K562 (cell line): ENCODE measurements at regions of chr1 and their contacts with region 1.

Region 1: GRCh38 chr1:143720087-143721023 is 251.4 kb downstream of the FAM72C start:
- DNase-seq: peak; percentile 48 to 80 (median 52)
- ATAC-seq: peak; percentile 87
- H3K4me3 ChIP-seq: peak overlapping the region; percentile 12; the same call in 1 of the 2 replicates
- H3K27ac ChIP-seq: peak overlapping the region; percentile 85
- H3K4me1 ChIP-seq: peaks cover 19 to 20% of the 10 kb centered on the region in 2 experiments
- H3K27me3 ChIP-seq: no peaks in the 10 kb centered on the region
- CTCF ChIP-seq: no peak
- EP300 ChIP-seq: peak; percentile 15; the same call in 1 of the 2 replicates
- POLR2A ChIP-seq: peak; percentile 98
- RAD21 ChIP-seq: no peak

Region 2: GRCh38 chr1:143619851-143620250 is 100.5 kb before region 1 on chr1:
- CTCF ChIA-PET with region 1: no interaction called
- POLR2A ChIA-PET with region 1: no interaction called
- in situ Hi-C with region 1: no loop called
- intact Hi-C with region 1: no loop called
- DNase-seq: no peak
- ATAC-seq: no peak
- H3K4me3 ChIP-seq: no peak overlapping the region
- H3K27ac ChIP-seq: no peak overlapping the region
- H3K4me1 ChIP-seq: no peaks in the 10 kb centered on the region
- H3K27me3 ChIP-seq: peaks cover 0 to 5% of the 10 kb centered on the region in 2 experiments; a peak in 1 of 5 replicates
- CTCF ChIP-seq: no peak
- EP300 ChIP-seq: no peak
- POLR2A ChIP-seq: no peak
- RAD21 ChIP-seq: no peak

Region 3: GRCh38 chr1:143643148-143643885 is 77.0 kb before region 1 on chr1:
- CTCF ChIA-PET with region 1: no interaction called
- POLR2A ChIA-PET with region 1: no interaction called
- in situ Hi-C with region 1: no loop called
- intact Hi-C with region 1: no loop called
- DNase-seq: no peak
- ATAC-seq: no peak
- H3K4me3 ChIP-seq: no peak overlapping the region
- H3K27ac ChIP-seq: no peak overlapping the region
- H3K4me1 ChIP-seq: peaks cover 0 to 8% of the 10 kb centered on the region in 2 experiments; a peak in 1 of 5 replicates
- H3K27me3 ChIP-seq: peaks cover 2 to 12% of the 10 kb centered on the region in 2 experiments; a peak in 2 of 5 replicates
- CTCF ChIP-seq: no peak
- EP300 ChIP-seq: no peak
- POLR2A ChIP-seq: no peak
- RAD21 ChIP-seq: no peak

Region 4: DNA sequence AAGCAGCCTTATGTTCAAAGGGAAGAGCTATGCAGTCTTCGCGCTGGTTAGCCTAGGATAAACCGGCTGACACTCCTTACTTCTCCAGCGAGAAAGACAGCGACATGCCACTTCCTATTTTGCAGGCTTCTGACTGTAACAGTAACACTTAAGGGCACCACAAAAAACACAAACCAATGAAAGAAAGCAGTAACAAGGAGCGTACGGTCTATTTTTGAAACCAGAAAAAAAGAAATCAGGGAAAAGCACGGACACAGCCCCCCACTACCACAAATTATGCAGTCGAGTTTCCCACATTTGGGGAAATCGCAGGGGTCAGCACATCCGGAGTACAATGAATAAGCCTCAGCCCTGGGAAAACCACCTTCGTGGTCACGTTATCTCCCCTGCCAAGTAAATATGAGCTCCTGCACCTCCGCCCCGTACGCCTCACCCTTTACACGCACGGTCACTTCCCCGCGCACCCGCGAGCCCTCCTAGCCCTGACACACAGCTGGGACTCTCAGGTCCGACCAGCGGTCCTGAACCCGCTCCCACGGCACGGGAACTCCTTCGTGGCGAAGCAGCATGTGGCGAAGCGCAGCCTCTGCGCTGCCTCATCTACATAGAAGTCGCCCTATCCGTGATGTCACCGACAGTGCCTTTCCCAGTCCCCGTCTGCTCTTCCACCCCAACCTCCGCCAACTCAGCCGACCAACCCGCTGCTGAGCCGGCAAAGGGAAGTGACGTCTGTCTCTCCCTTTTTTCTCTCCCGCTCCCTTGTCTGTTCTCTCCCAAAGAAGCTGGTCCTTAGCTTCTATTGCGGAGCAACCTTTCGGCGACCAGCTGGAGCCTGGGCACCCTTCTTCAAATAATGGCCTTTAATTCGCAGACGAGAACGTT is 831.4 kb after region 1 on chr1:
- CTCF ChIA-PET with region 1: no interaction called
- POLR2A ChIA-PET with region 1: no interaction called
- in situ Hi-C with region 1: loop called (anchors 10 kb)
- intact Hi-C with region 1: no loop called
- DNase-seq: peak; percentile 78 to 94 (median 86)
- ATAC-seq: peak; percentile 85
- H3K4me3 ChIP-seq: peak overlapping the region; percentile 39
- H3K27ac ChIP-seq: peak overlapping the region; percentile 100
- H3K4me1 ChIP-seq: peaks cover 7 to 10% of the 10 kb centered on the region in 2 experiments; a peak in 4 of 5 replicates
- H3K27me3 ChIP-seq: no peaks in the 10 kb centered on the region
- CTCF ChIP-seq: no peak
- EP300 ChIP-seq: peak; percentile 15; the same call in 1 of the 2 replicates
- POLR2A ChIP-seq: peak; percentile 100
- RAD21 ChIP-seq: peak in 1 of 2 experiments; percentile 24; a peak in 1 of 4 replicates